Psoas muscle (tissue), 8 donors: ENCODE measurements at regions of chr19 and their contacts with region 1.

Region 1: DNA sequence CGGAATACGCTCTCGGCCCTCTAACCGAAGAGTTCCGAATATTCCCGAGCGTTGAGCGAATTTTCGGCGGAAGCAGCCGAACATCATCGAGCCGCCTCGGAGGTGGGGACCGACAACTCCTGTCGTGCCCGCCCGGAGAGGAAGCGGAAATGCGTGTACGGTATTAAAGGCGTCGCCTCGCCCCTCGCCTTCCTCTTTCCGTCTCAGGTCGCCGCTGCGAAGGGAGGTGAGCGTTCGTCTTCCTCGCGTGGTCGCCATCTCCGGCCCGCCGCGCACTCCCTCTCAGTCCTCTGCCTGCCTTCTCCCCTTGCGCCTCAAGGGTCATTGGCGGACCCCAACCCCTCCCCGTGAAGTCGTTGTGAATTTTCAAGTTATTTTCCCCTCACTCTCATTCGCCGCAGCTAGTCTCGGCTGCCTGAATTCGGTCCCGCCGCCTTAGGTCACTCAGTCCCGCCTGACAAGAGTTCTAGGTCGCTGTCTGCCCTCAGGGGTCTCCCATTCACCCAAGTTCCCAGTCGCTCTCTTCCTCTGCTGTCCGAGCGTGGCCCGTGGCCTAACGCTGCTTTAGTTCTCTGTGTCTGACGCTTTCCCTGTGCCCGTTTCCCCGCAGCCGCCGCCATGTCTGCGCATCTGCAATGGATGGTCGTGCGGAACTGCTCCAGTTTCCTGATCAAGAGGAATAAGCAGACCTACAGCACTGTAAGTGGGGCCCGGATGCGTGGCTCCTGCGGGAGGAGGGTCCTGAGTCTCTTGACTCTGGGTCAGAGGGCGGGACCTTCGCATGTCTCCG is at the start of gene RPL28:
- DNase-seq: peak; percentile 97 to 99
- ATAC-seq: peak; percentile 90 to 91 (median 90)
- H3K4me3 ChIP-seq: peak within 1 kb of the TSS; percentile 81
- H3K27ac ChIP-seq: peak within 1 kb of the TSS; percentile 86
- H3K4me1 ChIP-seq: peaks cover 32% of the 10 kb centered on the region
- H3K27me3 ChIP-seq: no peaks in the 10 kb centered on the region
- CTCF ChIP-seq: no peak
- total RNA-seq, gene RPL28: 548 to 810 (median 665) TPM

Region 2: DNA sequence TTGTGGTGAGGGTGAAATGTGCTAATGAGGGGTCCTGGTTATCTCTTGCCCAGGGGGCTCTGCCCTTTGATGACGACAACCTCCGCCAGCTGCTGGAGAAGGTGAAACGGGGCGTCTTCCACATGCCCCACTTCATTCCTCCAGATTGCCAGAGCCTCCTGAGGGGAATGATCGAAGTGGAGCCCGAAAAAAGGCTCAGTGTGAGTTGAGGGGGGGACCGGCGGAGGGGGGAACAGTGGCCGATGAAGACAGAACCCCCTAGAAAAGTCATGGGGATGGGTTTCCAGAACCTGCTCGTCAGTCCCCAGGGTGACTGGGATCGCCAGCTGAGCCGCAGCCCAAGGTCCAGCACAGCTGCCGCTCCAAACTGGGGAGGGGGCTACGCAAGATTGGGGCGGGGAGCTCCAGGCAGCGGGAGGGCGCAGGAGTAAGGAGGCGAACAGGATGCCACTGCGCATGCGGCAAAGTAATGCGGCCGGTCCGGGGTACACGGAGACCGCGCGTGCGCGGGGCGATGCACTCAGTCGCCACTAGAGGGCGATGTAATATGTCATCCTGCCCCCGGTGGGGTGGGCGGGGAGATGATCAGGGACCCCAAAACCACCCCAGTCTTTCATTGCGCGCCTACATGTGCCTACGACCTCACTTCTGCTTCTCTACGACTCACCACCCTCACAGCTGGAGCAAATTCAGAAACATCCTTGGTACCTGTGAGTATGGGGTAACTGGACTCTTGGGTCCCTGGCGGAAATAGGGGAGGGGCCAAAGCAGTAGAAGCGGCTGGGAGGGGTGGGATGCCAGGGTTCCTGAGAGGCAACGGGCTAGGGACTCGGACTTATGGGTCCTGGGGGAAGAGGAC is 84.2 kb before region 1 on chr19:
- intact Hi-C with region 1: loop called (anchors 5 kb)
- DNase-seq: peak; percentile 88 to 93
- ATAC-seq: peak; percentile 86 to 91 (median 90)
- H3K4me3 ChIP-seq: peak overlapping the region; percentile 65
- H3K27ac ChIP-seq: no peak overlapping the region
- H3K4me1 ChIP-seq: no peaks in the 10 kb centered on the region
- H3K27me3 ChIP-seq: no peaks in the 10 kb centered on the region
- CTCF ChIP-seq: peak; percentile 95

Region 3: GRCh38 chr19:55339048-55339888 is 46.7 kb before region 1 on chr19 and contains the start of gene KMT5C:
- intact Hi-C with region 1: loop called in 1 of 2 experiments (anchors 5 kb)
- DNase-seq: peak; percentile 100
- ATAC-seq: peak; percentile 91 to 93 (median 92)
- H3K4me3 ChIP-seq: peak within 1 kb of the TSS; percentile 75
- H3K27ac ChIP-seq: peak within 1 kb of the TSS; percentile 93
- H3K4me1 ChIP-seq: peaks cover 12% of the 10 kb centered on the region
- H3K27me3 ChIP-seq: peaks cover 0 to 18% (median 0%) of the 10 kb centered on the region in 3 donors
- CTCF ChIP-seq: peak; percentile 41
- total RNA-seq, gene KMT5C: 3.9 to 5.7 (median 4.6) TPM

Region 4: DNA sequence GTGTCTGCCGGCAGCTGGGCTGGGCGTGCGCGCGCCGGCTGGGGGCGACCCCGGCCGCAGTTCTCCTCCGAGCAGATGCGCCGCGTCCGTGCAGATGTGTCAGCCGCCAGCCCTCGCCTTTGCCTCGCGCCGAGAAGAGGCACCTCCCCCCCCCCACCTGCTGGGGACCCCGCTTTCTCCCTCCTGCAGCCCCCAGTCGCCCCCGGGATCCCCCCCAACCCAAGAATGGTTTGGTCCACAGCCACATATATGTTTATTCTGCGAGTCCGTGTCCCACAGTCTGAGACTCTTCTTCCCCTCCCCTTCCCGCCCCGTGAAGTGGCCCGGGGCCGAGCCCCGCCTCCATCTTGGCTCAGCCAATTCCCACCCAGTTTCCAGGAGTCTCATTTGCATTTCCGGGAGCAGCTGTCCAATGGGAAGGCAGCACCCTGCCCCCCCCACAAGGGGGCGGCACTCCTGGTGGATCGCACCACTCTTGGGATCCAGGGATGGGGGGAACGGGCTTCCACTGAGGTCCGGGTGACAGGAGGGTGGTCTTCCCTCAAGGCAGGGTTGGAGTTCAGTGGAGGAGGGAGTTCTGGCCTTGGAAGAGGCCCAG is 66.9 kb after region 1 on chr19:
- intact Hi-C with region 1: loop called in 1 of 2 experiments (anchors 5 kb)
- DNase-seq: peak; percentile 76 to 90
- ATAC-seq: peak; percentile 80 to 96 (median 91)
- H3K4me3 ChIP-seq: no peak overlapping the region
- H3K27ac ChIP-seq: no peak overlapping the region
- H3K4me1 ChIP-seq: peaks cover 6% of the 10 kb centered on the region
- H3K27me3 ChIP-seq: peaks cover 0 to 24% (median 24%) of the 10 kb centered on the region in 3 donors
- CTCF ChIP-seq: no peak

Region 5: GRCh38 chr19:55624109-55625003 is 238.4 kb after region 1 on chr19 and contains the start of gene ZNF784:
- intact Hi-C with region 1: loop called in 1 of 2 experiments (anchors 10 kb)
- DNase-seq: peak; percentile 93 to 97
- ATAC-seq: peak; percentile 84 to 90 (median 88)
- H3K4me3 ChIP-seq: peak within 1 kb of the TSS; percentile 65
- H3K27ac ChIP-seq: peak within 1 kb of the TSS; percentile 90
- H3K4me1 ChIP-seq: peaks cover 37% of the 10 kb centered on the region
- H3K27me3 ChIP-seq: no peaks in the 10 kb centered on the region
- CTCF ChIP-seq: no peak
- total RNA-seq, gene ZNF784: 9.0 to 22.2 (median 11.4) TPM

Region 6: DNA sequence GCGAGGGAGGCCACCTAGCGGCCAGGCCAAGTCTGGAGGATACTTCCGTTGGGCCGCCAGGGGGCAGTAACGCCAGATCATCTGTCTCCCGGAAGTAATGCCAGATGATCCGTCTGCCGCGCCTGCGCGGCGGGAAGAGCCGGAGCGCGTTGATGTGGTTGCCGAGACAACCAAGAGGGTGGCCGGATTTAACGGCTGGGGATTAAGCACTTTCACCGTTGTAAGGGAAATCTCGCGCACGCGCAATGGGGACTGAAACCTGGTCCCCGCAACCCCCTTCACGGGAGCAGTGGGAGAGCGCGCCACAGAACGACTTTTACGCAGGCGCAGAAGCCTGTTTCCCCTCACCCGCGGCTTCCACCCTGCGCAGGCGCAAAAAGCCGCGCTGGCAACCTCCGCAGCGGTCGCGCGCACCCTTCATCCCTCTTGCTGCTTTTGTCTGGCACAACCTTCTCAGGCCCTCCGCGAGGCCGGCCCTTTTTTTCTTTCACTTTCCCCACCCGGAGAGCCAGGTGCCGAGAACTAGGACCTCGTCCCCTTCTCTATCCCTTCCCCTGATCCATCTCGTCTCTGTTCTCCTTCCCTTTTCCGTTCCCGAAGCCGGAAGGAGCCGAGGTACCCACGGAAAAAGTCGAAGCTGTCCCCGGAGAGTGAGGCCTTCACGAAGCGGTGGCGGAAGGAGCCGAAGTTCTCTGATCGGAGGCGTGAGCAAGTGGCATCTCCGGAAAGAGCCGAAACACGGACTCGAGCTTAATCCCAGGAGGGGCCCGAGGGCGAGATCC is 268.0 kb after region 1 on chr19:
- intact Hi-C with region 1: loop called in 1 of 2 experiments (anchors 10 kb)
- DNase-seq: peak; percentile 99 to 100
- ATAC-seq: peak; percentile 81 to 85 (median 84)
- H3K4me3 ChIP-seq: peak overlapping the region; percentile 71
- H3K27ac ChIP-seq: peak overlapping the region; percentile 91
- H3K4me1 ChIP-seq: peaks cover 37% of the 10 kb centered on the region
- H3K27me3 ChIP-seq: no peaks in the 10 kb centered on the region
- CTCF ChIP-seq: peak; percentile 97